Endothelial cell of umbilical vein (primary cell): ENCODE measurements at regions of chr1 and their contacts with region 1.

Region 1: GRCh38 chr1:41573785-41574713 is 89.6 kb upstream of the EDN2 start:
- DNase-seq: peak; percentile 65
- H3K4me3 ChIP-seq: no peak overlapping the region
- H3K27ac ChIP-seq: no peak overlapping the region
- H3K4me1 ChIP-seq: no peaks in the 10 kb centered on the region
- H3K27me3 ChIP-seq: no peaks in the 10 kb centered on the region
- CTCF ChIP-seq: peak; percentile 80 to 90
- POLR2A ChIP-seq: no peak

Region 2: DNA sequence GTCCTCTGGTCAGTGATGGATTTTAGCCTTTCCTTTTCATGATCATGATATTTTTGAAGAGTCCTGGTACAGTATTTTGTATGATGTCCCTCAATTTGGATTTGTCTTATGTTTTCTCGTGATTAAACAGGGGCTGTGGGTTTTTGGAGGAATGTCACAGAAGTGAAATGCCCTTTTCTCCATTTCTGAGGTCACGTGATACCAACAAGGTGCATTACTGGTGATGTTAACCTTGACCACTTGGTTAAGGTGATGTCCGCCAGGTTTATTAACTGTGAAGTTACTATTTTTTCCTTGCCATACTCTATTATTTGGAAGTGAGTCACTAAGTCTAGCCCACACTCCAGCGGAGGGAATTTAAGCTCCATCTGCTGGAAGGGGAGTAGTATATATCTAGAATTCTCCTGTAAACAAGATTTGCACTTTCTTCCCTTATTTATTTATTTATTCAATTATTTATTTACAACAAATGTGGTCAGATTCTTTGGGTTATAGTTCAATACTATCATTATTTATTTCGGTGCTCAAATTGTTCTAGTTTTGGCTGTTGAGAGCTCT is 221.2 kb after region 1 on chr1:
- CTCF ChIA-PET with region 1: interaction called, 29 read pairs
- POLR2A ChIA-PET with region 1: no interaction called
- dilution Hi-C with region 1: no loop called
- intact Hi-C with region 1: loop called (anchors 1 kb)
- DNase-seq: peak; percentile 43
- H3K4me3 ChIP-seq: no peak overlapping the region
- H3K27ac ChIP-seq: no peak overlapping the region
- H3K4me1 ChIP-seq: no peaks in the 10 kb centered on the region
- H3K27me3 ChIP-seq: peaks cover 0 to 2% of the 10 kb centered on the region in 2 experiments
- CTCF ChIP-seq: peak in 1 of 2 donors; percentile 22
- POLR2A ChIP-seq: no peak

Region 3: GRCh38 chr1:41870076-41870562 is 296.1 kb after region 1 on chr1:
- CTCF ChIA-PET with region 1: interaction called, 5 read pairs
- POLR2A ChIA-PET with region 1: no interaction called
- dilution Hi-C with region 1: no loop called
- intact Hi-C with region 1: loop called (anchors 1 kb)
- DNase-seq: peak; percentile 77
- H3K4me3 ChIP-seq: no peak overlapping the region
- H3K27ac ChIP-seq: peak overlapping the region; percentile 26
- H3K4me1 ChIP-seq: peaks cover 19% of the 10 kb centered on the region
- H3K27me3 ChIP-seq: no peaks in the 10 kb centered on the region
- CTCF ChIP-seq: no peak
- POLR2A ChIP-seq: no peak

Region 4: GRCh38 chr1:41891199-41891896 is 317.3 kb after region 1 on chr1:
- CTCF ChIA-PET with region 1: interaction called, 12 read pairs
- POLR2A ChIA-PET with region 1: no interaction called
- dilution Hi-C with region 1: no loop called
- intact Hi-C with region 1: loop called (anchors 1 kb)
- DNase-seq: peak; percentile 62
- H3K4me3 ChIP-seq: peak overlapping the region in 2 of 3 experiments; percentile 4 to 5
- H3K27ac ChIP-seq: peak overlapping the region; percentile 6
- H3K4me1 ChIP-seq: peaks cover 17% of the 10 kb centered on the region
- H3K27me3 ChIP-seq: no peaks in the 10 kb centered on the region
- CTCF ChIP-seq: peak; percentile 8 to 10
- POLR2A ChIP-seq: no peak

Region 5: GRCh38 chr1:42146626-42147320 is 572.7 kb after region 1 on chr1:
- CTCF ChIA-PET with region 1: interaction called, 6 read pairs
- POLR2A ChIA-PET with region 1: no interaction called
- dilution Hi-C with region 1: no loop called
- intact Hi-C with region 1: loop called (anchors 1 kb)
- DNase-seq: peak; percentile 49
- H3K4me3 ChIP-seq: no peak overlapping the region
- H3K27ac ChIP-seq: no peak overlapping the region
- H3K4me1 ChIP-seq: no peaks in the 10 kb centered on the region
- H3K27me3 ChIP-seq: peaks cover 21 to 22% of the 10 kb centered on the region in 2 experiments
- CTCF ChIP-seq: peak; percentile 74 to 91
- POLR2A ChIP-seq: no peak